Panc1 (cell line): ENCODE measurements at regions of chr1 and their contacts with region 1.

Region 1: DNA sequence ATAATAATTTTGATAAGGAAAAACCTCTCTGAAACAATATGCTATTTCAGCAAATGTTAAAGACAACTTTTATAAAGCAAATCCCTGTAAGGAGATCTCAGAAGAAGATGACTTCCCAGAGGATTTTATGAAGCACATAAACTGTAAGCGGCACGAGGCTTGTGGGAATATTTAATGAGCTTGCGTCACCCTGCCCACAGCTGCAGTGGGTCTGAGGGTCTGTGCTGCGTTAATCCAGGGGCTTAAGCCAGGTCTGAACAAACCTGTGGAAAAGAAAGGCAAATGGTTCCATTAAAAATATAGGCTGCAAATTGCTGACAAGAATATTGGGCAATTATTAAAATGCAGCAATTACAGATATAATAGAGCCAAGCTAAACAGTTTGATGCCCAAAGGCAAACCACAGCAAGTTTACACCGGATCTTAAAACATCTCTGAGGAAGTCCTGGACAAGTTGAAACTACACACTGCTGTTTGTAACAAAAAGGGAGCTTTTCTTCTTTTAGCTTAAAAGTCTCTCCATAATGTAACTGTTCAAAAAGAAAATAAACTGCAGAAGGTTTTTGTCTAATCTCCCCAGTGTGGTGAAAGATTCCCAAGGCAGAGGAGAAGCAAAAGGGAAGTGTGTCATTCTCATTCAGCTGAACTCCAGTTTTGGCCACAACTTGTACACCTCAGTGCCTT is 21.8 kb downstream of the TGFBR3 start:
- DNase-seq: no peak
- ATAC-seq: peak; percentile 84
- H3K4me3 ChIP-seq: peak overlapping the region in 1 of 2 experiments; percentile 12; a peak in 1 of 4 replicates
- H3K27ac ChIP-seq: peak overlapping the region; percentile 75
- H3K4me1 ChIP-seq: peaks cover 29% of the 10 kb centered on the region
- H3K27me3 ChIP-seq: no peaks in the 10 kb centered on the region
- CTCF ChIP-seq: no peak

Region 2: GRCh38 chr1:91682882-91683597 is 181.1 kb before region 1 on chr1:
- CTCF ChIA-PET with region 1: no interaction called
- POLR2A ChIA-PET with region 1: interaction called, 12 read pairs
- in situ Hi-C with region 1: no loop called
- intact Hi-C with region 1: no loop called
- DNase-seq: no peak
- ATAC-seq: no peak
- H3K4me3 ChIP-seq: no peak overlapping the region
- H3K27ac ChIP-seq: no peak overlapping the region
- H3K4me1 ChIP-seq: no peaks in the 10 kb centered on the region
- H3K27me3 ChIP-seq: no peaks in the 10 kb centered on the region
- CTCF ChIP-seq: no peak

Region 3: DNA sequence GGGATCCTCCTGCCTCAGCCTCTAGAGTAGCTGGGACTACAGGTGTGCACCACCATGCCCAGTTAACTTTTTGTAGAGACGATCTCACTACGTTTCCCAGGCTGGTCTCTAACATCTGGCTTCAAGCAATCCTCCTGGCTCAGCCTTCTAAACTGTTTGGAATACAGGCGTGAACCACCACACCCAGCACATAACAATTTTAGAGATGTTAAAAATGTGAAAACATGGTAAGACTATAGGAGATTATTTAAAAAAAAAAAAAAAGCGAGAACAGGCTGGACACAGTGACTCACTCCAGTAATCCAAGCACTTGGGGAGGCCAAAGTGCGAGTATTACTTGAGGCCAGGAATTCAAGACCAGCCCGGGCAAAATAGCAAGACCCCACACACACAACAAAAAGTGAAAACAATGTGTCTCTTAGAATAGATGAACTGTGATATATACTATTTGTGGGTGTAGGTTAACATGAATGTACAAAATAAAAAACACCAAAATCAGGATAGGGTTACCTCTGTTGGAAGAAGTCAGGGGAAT is 1336.0 kb after region 1 on chr1:
- CTCF ChIA-PET with region 1: no interaction called
- POLR2A ChIA-PET with region 1: no interaction called
- in situ Hi-C with region 1: no loop called
- intact Hi-C with region 1: no loop called
- DNase-seq: no peak
- ATAC-seq: no peak
- H3K4me3 ChIP-seq: no peak overlapping the region
- H3K27ac ChIP-seq: no peak overlapping the region
- H3K4me1 ChIP-seq: no peaks in the 10 kb centered on the region
- H3K27me3 ChIP-seq: no peaks in the 10 kb centered on the region
- CTCF ChIP-seq: no peak